A549 (cell line): ENCODE measurements at regions of chr1 and their contacts with region 1.

Region 1: GRCh38 chr1:89987170-89987819 is 7.6 kb upstream of the ZNF326 start:
- DNase-seq: peak; percentile 53 to 79
- ATAC-seq: peak; percentile 86 to 90; a peak in 5 of 6 replicates
- H3K4me3 ChIP-seq: no peak overlapping the region
- H3K27ac ChIP-seq: peak overlapping the region; percentile 44 to 78; a peak in 5 of 6 replicates
- H3K4me1 ChIP-seq: peaks cover 48% of the 10 kb centered on the region
- CTCF ChIP-seq: peak; percentile 82
- EP300 ChIP-seq: no peak
- POLR2A ChIP-seq: no peak
- RAD21 ChIP-seq: peak; percentile 89 to 92

Region 2: DNA sequence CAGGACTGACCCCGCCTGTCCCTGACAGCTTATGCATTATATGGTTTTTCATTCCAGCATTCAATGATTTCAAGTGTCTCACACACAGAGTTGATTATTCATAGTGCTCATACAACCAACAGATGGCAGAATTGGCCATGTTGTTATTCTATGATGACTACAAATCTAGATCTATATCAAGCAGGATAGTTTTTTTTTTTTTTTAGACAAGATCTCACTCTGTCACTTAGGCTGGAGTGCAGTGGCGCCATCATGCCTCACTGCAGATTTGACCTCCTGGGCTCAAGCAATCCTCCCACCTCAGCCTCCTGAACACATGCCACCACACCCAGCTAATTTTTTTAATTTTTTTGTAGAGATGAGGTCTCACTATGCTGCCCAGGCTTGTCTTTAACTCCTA is 206.6 kb before region 1 on chr1:
- CTCF ChIA-PET with region 1: interaction called, 54 read pairs
- POLR2A ChIA-PET with region 1: no interaction called
- DNase-seq: peak; percentile 56 to 69
- ATAC-seq: peak; percentile 90 to 98
- H3K4me3 ChIP-seq: no peak overlapping the region
- H3K27ac ChIP-seq: no peak overlapping the region
- H3K4me1 ChIP-seq: peaks cover 6% of the 10 kb centered on the region; the same call in 1 of the 3 replicates
- CTCF ChIP-seq: peak; percentile 55
- EP300 ChIP-seq: no peak
- POLR2A ChIP-seq: no peak
- RAD21 ChIP-seq: peak; percentile 67 to 74

Region 3: GRCh38 chr1:89804642-89805237 is 182.6 kb before region 1 on chr1:
- CTCF ChIA-PET with region 1: interaction called, 89 read pairs
- POLR2A ChIA-PET with region 1: no interaction called
- DNase-seq: peak; percentile 61 to 84
- ATAC-seq: peak; percentile 84 to 92; a peak in 5 of 6 replicates
- H3K4me3 ChIP-seq: no peak overlapping the region
- H3K27ac ChIP-seq: peak overlapping the region in 1 of 2 experiments; percentile 45; a peak in 1 of 6 replicates
- H3K4me1 ChIP-seq: peaks cover 33% of the 10 kb centered on the region
- CTCF ChIP-seq: peak; percentile 89
- EP300 ChIP-seq: no peak
- POLR2A ChIP-seq: no peak
- RAD21 ChIP-seq: peak; percentile 88 to 95

Region 4: DNA sequence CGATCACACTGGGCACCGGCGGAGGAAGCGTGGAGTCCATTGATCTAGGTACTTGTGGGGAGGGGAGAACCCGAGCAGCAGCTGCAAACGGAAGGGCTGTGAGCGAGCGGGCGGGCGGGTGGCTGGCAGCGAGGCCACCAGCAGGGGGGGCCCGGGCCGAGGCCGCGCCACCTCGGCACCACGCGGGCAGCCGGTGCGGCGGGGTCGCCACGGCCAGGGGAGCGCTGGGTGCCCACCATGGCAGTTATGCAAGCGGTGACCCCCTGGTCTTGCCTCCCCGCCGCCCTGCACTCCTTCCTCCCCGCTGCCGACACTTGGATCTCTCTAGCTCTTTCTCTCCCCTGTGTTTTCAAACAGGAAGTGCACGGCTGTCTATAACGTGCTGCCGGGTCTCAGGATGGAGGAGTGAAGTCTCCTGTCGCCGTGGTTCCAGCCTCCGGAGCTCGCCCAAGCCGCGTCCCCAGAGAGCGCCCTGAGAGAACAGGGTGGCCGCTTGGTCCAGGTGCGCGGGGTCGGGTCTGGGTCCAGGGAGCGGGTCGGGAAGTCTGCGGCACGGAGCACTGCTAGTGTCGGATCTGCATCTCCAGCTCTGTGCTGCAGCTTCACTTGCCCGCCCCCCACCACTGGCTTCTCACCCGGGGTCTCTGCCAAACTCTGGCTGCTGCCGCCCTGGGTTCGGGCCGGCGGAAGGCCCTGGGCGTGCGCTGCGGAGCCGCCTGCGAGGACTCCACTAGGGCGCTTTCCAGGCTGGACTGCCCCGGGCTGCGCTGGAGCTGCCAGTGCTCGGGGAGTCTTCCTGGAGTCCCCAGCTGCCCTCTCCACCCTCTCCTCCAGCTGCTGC is 143.8 kb before region 1 on chr1:
- CTCF ChIA-PET with region 1: interaction called, 35 read pairs
- POLR2A ChIA-PET with region 1: interaction called, 3 read pairs
- DNase-seq: peak; percentile 70 to 72
- ATAC-seq: peak; percentile 93 to 94
- H3K4me3 ChIP-seq: peak overlapping the region; percentile 81
- H3K27ac ChIP-seq: peak overlapping the region; percentile 97
- H3K4me1 ChIP-seq: peaks cover 69% of the 10 kb centered on the region
- CTCF ChIP-seq: peak; percentile 49
- EP300 ChIP-seq: no peak
- POLR2A ChIP-seq: peak; percentile 60
- RAD21 ChIP-seq: peak; percentile 32 to 65; a peak in 4 of 5 replicates

Region 5: GRCh38 chr1:89877756-89878155 is 109.5 kb before region 1 on chr1:
- CTCF ChIA-PET with region 1: interaction called, 11 read pairs
- POLR2A ChIA-PET with region 1: no interaction called
- DNase-seq: no peak
- ATAC-seq: no peak
- H3K4me3 ChIP-seq: no peak overlapping the region
- H3K27ac ChIP-seq: no peak overlapping the region
- H3K4me1 ChIP-seq: peaks cover 12% of the 10 kb centered on the region
- CTCF ChIP-seq: no peak
- EP300 ChIP-seq: no peak
- POLR2A ChIP-seq: no peak
- RAD21 ChIP-seq: no peak

Region 6: DNA sequence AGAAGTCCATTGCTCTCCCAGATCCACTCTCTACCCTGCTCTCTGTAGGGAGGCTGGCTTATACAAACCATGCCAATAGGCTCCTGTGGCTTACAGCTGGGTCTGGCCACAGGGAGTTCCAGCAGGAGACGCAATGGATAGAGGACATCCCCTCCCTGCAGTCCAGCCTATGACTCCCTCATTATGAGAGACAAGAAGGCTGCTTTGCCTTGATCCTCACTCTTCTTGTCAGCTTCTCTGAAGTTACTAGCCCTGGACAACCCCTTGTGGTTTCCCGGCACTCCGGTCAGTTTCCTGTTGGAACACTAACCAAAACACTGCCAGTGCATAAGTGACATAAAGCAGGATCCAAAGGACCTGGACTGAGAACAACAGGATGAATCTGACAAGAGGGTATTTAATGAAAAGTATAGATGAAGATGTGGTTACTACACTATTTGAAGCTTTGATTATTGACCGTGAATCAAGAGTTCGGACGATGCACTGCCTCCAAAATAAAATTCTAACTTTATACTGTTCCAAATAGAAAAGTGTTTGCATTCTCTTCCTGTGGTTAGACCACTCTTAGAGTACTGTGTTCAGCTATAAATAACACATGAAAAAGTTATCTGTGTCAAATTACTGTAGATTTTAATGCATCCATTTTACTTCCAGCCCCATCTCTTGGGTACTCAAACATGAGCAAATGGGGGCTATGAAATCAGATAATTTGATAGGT is 25.1 kb before region 1 on chr1:
- CTCF ChIA-PET with region 1: interaction called, 10 read pairs
- POLR2A ChIA-PET with region 1: no interaction called
- DNase-seq: no peak
- ATAC-seq: 0 out of 6 replicates have a peak, but pooled peaks of 1 of the 2 experiments have one; percentile 43
- H3K4me3 ChIP-seq: no peak overlapping the region
- H3K27ac ChIP-seq: peak overlapping the region in 1 of 2 experiments; percentile 31; a peak in 1 of 6 replicates
- H3K4me1 ChIP-seq: peaks cover 18% of the 10 kb centered on the region
- CTCF ChIP-seq: no peak
- EP300 ChIP-seq: no peak
- POLR2A ChIP-seq: no peak
- RAD21 ChIP-seq: no peak

Region 7: GRCh38 chr1:89974701-89975470 is 12.4 kb before region 1 on chr1:
- CTCF ChIA-PET with region 1: interaction called, 12 read pairs
- POLR2A ChIA-PET with region 1: no interaction called
- DNase-seq: peak in 1 of 2 experiments; percentile 78
- ATAC-seq: peak; percentile 64 to 86; a peak in 5 of 6 replicates
- H3K4me3 ChIP-seq: no peak overlapping the region
- H3K27ac ChIP-seq: peak overlapping the region; percentile 76 to 88
- H3K4me1 ChIP-seq: peaks cover 52% of the 10 kb centered on the region
- CTCF ChIP-seq: no peak
- EP300 ChIP-seq: no peak; a peak in 1 of 5 replicates
- POLR2A ChIP-seq: no peak
- RAD21 ChIP-seq: no peak